ENCODE measurements at regions of chr18 and their contacts with region 1.

Region 1: GRCh38 chr18:25351777-25352628 is at the start of gene ZNF521:
- DNase-seq: peak; percentile 89 to 90 (median 90)
- ATAC-seq: peak; percentile 83 to 93 (median 87)
- H3K4me3 ChIP-seq: peak within 1 kb of the TSS; percentile 52 to 89 (median 78)
- H3K27ac ChIP-seq: peak within 1 kb of the TSS; percentile 80 to 95 (median 91)
- H3K4me1 ChIP-seq: peaks cover 0 to 24% (median 7%) of the 10 kb centered on the region in 12 donors
- H3K27me3 ChIP-seq: peaks cover 0 to 31% (median 0%) of the 10 kb centered on the region in 9 donors
- CTCF ChIP-seq: peak in 8 of 12 donors; percentile 16 to 45 (median 30)
- POLR2A ChIP-seq: peak in 1 of 2 donors; percentile 68
- total RNA-seq, gene ZNF521: 12.2 to 24.4 (median 15.2) TPM

Region 2: DNA sequence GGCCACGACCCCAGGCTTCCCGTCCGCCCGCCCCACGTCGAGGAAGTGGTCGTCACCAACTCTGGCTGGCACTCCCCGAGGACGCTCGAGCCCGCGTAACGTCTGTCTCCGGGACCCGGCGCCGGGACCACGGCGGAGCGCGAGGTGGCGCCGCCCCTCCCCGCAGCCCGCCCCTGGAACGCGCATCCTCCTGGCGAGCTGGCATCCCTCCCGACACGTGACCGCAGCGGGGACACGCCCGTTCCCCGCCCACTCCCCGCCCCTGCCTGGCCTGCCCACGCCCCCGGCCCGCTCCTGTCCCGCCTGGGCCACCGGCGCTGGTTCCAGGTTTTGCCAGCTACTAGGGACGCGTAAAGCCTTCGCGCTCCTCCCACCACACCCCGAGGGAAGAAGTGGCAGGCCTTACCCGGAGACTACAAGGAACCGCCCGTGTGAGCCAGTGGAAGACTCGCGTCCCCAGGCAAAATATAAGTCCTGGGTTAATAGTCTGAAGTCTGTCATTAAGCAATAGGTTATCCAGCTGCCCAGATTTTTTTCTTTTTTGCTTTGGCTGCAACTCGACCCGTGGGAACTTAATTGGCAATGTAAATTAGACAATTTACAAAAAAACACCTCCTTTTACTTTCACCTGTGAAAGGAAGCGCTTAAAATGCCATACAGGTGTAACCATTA is 954.2 kb before region 1 on chr18 and contains the start of gene OSBPL1A:
- intact Hi-C with region 1: loop called in 1 of 10 experiments (anchors 5 kb)
- DNase-seq: peak; percentile 95 to 98 (median 96)
- ATAC-seq: peak; percentile 97 to 99 (median 98)
- H3K4me3 ChIP-seq: peak within 1 kb of the TSS; percentile 65 to 88 (median 76)
- H3K27ac ChIP-seq: peak within 1 kb of the TSS in 11 of 12 donors; percentile 66 to 94 (median 84)
- H3K4me1 ChIP-seq: peaks cover 0 to 20% (median 6%) of the 10 kb centered on the region in 12 donors
- H3K27me3 ChIP-seq: no peaks in the 10 kb centered on the region
- CTCF ChIP-seq: peak in 1 of 12 donors; percentile 28
- POLR2A ChIP-seq: peak in 1 of 2 donors; percentile 54
- total RNA-seq, gene OSBPL1A: 49.7 to 85.4 (median 76.1) TPM

Region 3: GRCh38 chr18:24987303-24988252 is 364.4 kb before region 1 on chr18:
- intact Hi-C with region 1: loop called in 2 of 10 experiments (anchors 5 kb)
- DNase-seq: peak in 3 of 5 donors; percentile 25 to 59 (median 41)
- ATAC-seq: peak; percentile 70 to 83 (median 74)
- H3K4me3 ChIP-seq: peak overlapping the region in 7 of 12 donors; percentile 13 to 42 (median 26)
- H3K27ac ChIP-seq: peak overlapping the region; percentile 6 to 73 (median 55)
- H3K4me1 ChIP-seq: peaks cover 0 to 34% (median 9%) of the 10 kb centered on the region in 12 donors
- H3K27me3 ChIP-seq: no peaks in the 10 kb centered on the region
- CTCF ChIP-seq: no peak
- POLR2A ChIP-seq: no peak

Region 4: DNA sequence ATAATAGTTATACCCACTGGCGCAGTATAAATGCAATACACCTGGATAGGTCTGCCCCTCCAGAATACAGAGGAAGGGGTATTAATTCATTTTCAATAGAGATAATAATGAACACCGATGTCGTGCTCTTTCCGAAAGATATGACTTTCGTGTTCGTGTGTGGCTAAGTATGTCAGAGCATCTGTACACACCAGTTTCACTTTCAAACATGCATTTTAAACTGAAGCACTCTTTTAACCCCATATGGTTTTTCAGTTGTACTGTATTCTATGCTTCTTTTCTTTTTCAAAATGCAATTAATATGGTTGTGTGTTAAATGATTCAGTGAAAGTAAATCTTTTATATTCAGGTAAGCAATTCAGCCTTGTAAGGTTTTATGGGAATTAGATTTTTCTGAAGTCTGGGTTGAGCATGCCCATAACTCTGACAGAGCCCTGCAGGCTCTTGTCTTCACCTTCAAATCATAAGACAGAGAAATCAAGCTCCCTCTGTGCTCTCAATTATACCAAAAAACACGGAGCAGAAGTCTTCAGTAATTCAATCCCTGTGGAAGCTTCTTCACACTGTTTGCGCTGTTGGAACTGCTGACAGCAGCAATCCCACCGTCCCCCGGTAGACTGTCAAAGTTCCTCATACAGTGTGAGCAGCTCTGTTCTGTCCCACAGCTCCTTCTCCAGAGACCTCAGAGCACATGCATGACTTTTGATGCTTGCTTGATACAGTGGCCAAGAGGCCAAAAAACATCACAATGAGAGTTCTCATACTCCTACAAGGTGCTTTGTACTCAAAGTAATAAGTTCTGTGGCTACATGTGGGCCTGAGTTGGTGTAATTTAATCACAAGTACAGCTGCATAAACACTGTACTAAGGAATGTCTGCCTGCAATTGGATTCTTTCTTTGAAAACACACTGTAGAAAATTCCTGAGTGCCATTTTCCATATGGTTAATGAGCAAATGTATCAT is 186.9 kb before region 1 on chr18:
- intact Hi-C with region 1: loop called in 4 of 10 experiments (anchors 5 to 10 kb)
- DNase-seq: peak; percentile 19 to 46 (median 29)
- ATAC-seq: peak; percentile 72 to 82 (median 80)
- H3K4me3 ChIP-seq: peak overlapping the region; percentile 10 to 60 (median 44)
- H3K27ac ChIP-seq: peak overlapping the region in 8 of 12 donors; percentile 17 to 61 (median 44)
- H3K4me1 ChIP-seq: peaks cover 0 to 29% (median 17%) of the 10 kb centered on the region in 12 donors
- H3K27me3 ChIP-seq: no peaks in the 10 kb centered on the region
- CTCF ChIP-seq: peak in 2 of 12 donors; percentile 13 to 16
- POLR2A ChIP-seq: no peak

Region 5: GRCh38 chr18:25289001-25289631 is 62.9 kb before region 1 on chr18:
- intact Hi-C with region 1: loop called in 6 of 10 experiments (anchors 5 to 10 kb)
- DNase-seq: no peak
- ATAC-seq: no peak
- H3K4me3 ChIP-seq: peak overlapping the region in 1 of 12 donors; percentile 29
- H3K27ac ChIP-seq: peak overlapping the region in 6 of 12 donors; percentile 16 to 51 (median 39)
- H3K4me1 ChIP-seq: peaks cover 0 to 43% (median 27%) of the 10 kb centered on the region in 12 donors
- H3K27me3 ChIP-seq: no peaks in the 10 kb centered on the region
- CTCF ChIP-seq: no peak
- POLR2A ChIP-seq: no peak

Region 6: GRCh38 chr18:25299426-25300300 is 52.3 kb before region 1 on chr18:
- intact Hi-C with region 1: no loop called
- DNase-seq: no peak
- ATAC-seq: peak in 3 of 4 donors; percentile 16 to 66 (median 27)
- H3K4me3 ChIP-seq: no peak overlapping the region
- H3K27ac ChIP-seq: peak overlapping the region in 5 of 12 donors; percentile 1 to 38 (median 29)
- H3K4me1 ChIP-seq: peaks cover 3 to 29% (median 14%) of the 10 kb centered on the region in 12 donors
- H3K27me3 ChIP-seq: no peaks in the 10 kb centered on the region
- CTCF ChIP-seq: no peak
- POLR2A ChIP-seq: no peak

Region 7: DNA sequence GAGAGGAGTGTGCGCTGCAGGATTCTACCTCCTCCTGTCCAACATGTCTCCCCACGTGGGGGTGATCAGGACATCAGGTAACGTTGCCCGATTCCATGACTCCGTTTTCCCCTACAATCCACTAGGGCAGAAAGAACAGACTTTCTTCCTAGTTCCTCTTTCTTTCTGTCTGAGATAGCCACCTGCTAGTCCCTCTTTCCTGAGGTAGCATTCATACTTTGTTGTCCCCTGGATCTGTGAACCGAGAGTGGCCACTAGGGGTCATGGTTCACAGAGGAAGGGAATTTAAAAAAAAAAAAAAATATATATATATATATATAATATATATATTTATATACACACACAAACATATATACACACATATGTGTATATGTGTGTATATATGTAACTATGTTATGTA is 209.9 kb after region 1 on chr18:
- intact Hi-C with region 1: loop called in 1 of 10 experiments (anchors 10 kb)
- DNase-seq: no peak
- ATAC-seq: no peak
- H3K4me3 ChIP-seq: no peak overlapping the region
- H3K27ac ChIP-seq: no peak overlapping the region
- H3K4me1 ChIP-seq: peaks cover 0 to 1% (median 0%) of the 10 kb centered on the region in 12 donors
- H3K27me3 ChIP-seq: no peaks in the 10 kb centered on the region
- CTCF ChIP-seq: peak in 7 of 12 donors; percentile 12 to 37 (median 26)
- POLR2A ChIP-seq: no peak

Measured in heart left ventricle (tissue), 16 donors.